Dendritic cell treated with granulocyte-macrophage colony-stimulating factor and Interleukin-4, amounts not matched to agents 40 ng/mL and 50 ng/mL, for 4 days (primary cell): ENCODE measurements at regions of chr7 and their contacts with region 1.

Region 1: DNA sequence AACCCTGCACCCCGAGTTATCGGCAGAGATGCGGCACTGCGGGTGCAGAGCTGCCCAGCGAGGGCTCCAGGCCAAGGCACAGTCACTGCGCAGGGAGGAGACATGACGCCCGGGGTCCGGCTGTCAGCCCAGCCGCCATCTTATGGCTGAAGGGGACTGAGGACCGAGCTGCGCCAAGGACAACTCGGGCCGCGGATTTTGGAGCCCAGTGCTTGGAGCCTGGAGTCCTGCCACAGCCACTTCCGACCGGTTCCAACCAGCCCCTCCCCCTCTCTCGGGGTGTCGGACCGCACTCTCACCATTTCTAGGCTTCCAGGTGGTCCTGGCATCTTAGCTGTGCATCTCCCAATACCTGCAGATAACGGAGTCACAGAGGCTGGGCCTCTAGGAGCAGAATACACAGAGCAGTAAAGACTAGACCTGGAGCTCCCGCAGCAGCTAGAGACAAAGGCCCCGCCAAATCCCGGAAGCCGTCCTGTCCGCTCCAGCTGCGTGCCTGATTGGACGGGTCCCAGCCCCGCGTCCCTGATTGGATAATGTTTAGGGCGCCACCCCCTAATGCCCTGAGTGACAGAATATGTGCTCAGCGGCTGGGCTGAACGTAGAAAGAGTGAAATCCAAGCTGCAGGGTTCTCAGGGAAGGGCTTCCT is at the start of gene ZNF680:
- H3K4me3 Mint-ChIP-seq: peak within 1 kb of the TSS; percentile 94
- H3K27ac Mint-ChIP-seq: peak within 1 kb of the TSS; percentile 95
- H3K4me1 Mint-ChIP-seq: peaks cover 5% of the 10 kb centered on the region
- H3K27me3 Mint-ChIP-seq: peaks cover 2% of the 10 kb centered on the region

Region 2: DNA sequence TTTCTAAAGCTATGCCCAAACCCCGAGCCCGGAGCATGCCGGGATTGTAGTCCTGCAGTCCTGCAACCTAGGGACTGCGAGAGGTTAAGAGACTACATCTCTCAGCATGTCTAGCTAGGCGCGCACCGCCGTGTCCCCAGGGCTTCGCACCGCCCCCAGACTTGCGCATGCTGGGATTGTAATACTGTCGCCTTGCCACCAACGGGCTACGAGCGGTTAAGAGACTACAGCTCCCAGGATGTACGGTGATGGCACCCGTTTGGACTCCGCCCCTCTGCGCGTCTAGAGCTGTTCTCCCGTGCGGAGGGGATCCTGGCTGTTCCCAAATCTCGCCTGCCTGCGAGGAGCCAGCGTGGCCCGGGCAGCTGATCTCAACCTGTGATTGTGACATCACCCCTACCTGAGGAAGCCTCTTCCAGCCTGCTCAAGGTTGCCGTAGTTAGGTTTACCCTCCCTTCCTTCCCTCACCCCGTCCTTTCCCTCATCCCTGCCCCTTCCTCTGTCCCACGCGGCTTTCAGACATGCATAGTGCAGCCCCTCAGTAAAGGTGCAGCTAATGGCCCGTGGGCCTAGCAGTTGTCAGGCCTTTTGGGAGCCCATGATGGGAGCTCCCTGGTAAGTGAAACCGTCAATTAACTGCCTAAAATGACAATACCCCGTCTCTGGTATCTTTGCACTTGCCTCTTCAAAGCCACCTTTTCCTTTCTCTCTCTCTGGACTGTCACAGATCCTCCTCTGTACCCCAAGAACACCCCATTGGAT is 255.3 kb before region 1 on chr7:
- intact Hi-C with region 1: loop called (anchors 5 kb)
- H3K4me3 Mint-ChIP-seq: peak overlapping the region; percentile 99
- H3K27ac Mint-ChIP-seq: peak overlapping the region; percentile 95
- H3K4me1 Mint-ChIP-seq: peaks cover 17% of the 10 kb centered on the region
- H3K27me3 Mint-ChIP-seq: no peaks in the 10 kb centered on the region

Region 3: DNA sequence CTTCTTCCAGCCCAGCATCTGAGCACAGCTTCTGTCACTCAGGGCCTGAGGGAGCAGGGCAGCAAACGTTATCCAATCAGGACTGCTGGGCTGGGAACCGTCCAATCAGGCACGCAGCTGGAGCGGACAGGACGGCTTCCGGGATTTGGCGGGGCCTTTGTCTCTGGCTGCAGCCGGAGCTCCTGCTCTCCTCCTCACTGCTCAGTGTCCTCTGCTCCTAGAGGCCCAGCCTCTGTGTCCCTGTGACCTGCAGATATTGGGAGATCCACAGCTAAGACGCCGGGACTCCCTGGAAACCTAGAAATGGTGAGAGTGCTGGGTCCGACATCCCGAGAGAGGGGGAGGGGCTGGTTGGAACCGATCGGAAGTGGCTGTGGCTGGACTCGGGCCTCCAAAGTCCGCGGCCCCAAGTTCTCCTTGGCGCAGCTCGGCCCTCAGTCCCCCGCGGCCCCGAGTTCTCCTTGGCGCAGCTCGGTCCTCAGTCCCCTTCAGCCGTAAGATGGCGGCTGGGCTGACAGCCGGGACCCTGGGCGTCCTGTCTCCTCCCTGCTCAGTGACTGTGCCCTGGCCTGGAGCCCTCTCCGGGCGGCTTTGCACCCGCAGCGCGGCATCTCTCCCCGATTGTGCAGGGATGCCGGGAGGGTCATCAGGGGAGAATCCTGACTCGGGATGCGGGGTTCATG is 103.4 kb after region 1 on chr7 and contains the start of gene ZNF107:
- intact Hi-C with region 1: loop called (anchors 1 kb)
- H3K4me3 Mint-ChIP-seq: peak within 1 kb of the TSS; percentile 98
- H3K27ac Mint-ChIP-seq: peak within 1 kb of the TSS; percentile 90
- H3K4me1 Mint-ChIP-seq: peaks cover 16% of the 10 kb centered on the region
- H3K27me3 Mint-ChIP-seq: no peaks in the 10 kb centered on the region

Region 4: GRCh38 chr7:64755865-64756264 is 193.1 kb after region 1 on chr7:
- intact Hi-C with region 1: no loop called
- H3K4me3 Mint-ChIP-seq: no peak overlapping the region
- H3K27ac Mint-ChIP-seq: no peak overlapping the region
- H3K4me1 Mint-ChIP-seq: no peaks in the 10 kb centered on the region
- H3K27me3 Mint-ChIP-seq: no peaks in the 10 kb centered on the region

Region 5: DNA sequence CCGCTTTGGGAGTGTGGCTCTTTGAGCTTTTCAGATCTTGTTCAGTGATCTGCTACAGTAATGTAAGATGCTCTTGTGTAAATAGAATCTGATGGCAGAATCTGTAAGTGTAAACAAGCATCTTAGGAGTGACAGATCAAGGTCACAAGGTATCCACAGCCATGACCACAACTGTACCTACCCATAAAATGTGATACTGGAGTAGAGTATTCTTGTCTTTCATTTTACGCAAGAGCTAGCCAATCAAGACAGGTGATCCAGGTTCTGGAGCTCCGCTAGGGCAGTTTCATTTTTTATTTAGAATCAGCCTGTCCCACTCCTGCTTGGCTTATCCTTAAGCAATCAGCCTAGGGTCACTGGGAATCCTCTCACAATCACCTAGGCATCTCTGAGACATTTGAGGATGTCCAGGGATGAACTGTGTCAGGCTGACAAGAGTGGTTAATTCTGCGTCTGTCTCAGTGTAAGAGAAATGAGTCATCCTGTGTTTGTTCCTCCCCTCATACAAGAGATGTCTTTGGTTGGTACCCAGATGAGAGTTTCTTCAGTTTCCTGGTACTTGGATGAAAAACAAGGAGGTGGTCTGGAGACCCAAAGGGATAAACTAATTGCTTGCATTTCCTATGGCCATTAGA is 245.1 kb after region 1 on chr7:
- intact Hi-C with region 1: no loop called
- H3K4me3 Mint-ChIP-seq: no peak overlapping the region
- H3K27ac Mint-ChIP-seq: no peak overlapping the region
- H3K4me1 Mint-ChIP-seq: no peaks in the 10 kb centered on the region
- H3K27me3 Mint-ChIP-seq: no peaks in the 10 kb centered on the region